PC-9 (cell line): ENCODE measurements at regions of chr20 and their contacts with region 1.

Region 1: DNA sequence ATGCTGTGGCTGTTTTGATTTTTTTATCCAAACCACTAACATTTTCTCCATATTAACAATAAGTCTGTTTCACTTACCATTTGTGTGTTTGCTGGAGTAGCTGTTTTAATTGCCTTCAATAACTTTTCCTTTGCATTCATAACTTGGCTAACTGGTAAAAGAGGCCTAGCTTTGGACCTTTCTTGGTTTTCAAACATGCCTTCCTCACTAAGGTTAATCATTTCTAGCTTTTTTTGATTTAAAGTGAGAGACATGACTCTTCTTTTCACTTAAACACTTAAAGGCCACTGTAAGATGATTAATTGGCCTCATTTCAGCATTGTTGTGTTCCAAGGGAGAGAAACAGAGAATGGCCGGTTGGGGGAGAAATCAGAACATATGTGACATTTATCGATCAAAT is 2.9 kb downstream of the WFDC12 start:
- DNase-seq: no peak
- H3K4me3 ChIP-seq: no peak overlapping the region
- H3K27ac ChIP-seq: no peak overlapping the region
- H3K4me1 ChIP-seq: no peaks in the 10 kb centered on the region
- H3K27me3 ChIP-seq: no peaks in the 10 kb centered on the region
- CTCF ChIP-seq: no peak

Region 2: DNA sequence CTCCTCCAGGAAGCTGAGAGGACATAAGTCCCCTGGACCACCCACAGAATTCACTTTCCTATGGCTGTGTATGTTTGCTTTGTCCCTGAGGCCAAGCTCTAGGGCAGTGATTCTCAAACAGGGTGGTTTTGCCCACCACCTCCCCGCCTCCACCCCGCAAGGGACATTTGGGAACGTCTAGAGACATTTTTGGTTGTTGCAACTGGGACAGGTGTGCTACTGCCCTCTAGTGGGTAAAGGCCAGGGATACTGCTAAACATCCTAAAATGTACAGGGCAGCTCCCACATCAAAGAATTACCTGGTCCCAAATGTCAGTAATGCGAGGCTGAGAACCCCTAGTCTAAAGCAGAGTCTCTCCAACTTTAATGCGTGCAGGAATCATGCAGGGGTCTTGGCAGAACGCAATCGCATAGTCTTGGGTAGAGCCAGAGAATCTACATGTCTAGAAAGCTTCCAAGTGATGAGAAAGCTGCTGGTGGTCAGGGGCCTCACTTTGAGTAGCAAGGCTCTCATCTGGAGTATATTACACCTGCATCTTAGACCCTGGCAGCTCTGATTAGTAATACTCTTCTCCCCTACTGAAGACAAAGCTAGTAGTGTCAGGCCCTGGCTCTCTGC is 25.5 kb before region 1 on chr20:
- CTCF ChIA-PET with region 1: interaction called, 16 read pairs
- POLR2A ChIA-PET with region 1: no interaction called
- intact Hi-C with region 1: no loop called
- DNase-seq: peak; percentile 54 to 65
- H3K4me3 ChIP-seq: no peak overlapping the region
- H3K27ac ChIP-seq: no peak overlapping the region
- H3K4me1 ChIP-seq: no peaks in the 10 kb centered on the region
- H3K27me3 ChIP-seq: no peaks in the 10 kb centered on the region
- CTCF ChIP-seq: peak; percentile 91